ENCODE measurements at regions of chr3 and their contacts with region 1.

Region 1: DNA sequence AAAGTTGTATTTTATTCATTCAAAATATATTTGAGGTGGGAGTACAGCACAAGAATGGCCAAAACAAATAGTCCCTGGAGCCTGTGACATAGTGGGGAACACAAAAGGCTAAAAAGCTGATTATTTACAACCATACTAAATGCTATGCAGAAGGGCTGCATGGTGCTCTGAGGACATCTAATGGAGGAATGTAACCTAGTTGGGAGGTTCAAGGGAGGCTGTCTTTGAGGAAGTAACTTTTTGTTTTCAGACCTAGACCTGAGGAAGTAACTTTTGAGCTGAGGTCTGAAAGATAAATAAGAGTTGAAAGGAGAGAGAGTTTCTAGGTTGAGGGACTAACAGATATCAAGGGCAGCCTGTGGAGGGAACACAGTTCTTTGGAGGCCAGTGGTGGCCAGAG is 34.8 kb upstream of the RASA2 start:
- DNase-seq: peak in 1 of 5 donors; percentile 52
- H3K4me3 ChIP-seq: no peak overlapping the region
- H3K27ac ChIP-seq: no peak overlapping the region
- H3K4me1 ChIP-seq: peaks cover 3% of the 10 kb centered on the region
- H3K27me3 ChIP-seq: no peaks in the 10 kb centered on the region
- CTCF ChIP-seq: peak; percentile 26 to 72 (median 72)
- EP300 ChIP-seq: no peak
- POLR2A ChIP-seq: no peak

Region 2: DNA sequence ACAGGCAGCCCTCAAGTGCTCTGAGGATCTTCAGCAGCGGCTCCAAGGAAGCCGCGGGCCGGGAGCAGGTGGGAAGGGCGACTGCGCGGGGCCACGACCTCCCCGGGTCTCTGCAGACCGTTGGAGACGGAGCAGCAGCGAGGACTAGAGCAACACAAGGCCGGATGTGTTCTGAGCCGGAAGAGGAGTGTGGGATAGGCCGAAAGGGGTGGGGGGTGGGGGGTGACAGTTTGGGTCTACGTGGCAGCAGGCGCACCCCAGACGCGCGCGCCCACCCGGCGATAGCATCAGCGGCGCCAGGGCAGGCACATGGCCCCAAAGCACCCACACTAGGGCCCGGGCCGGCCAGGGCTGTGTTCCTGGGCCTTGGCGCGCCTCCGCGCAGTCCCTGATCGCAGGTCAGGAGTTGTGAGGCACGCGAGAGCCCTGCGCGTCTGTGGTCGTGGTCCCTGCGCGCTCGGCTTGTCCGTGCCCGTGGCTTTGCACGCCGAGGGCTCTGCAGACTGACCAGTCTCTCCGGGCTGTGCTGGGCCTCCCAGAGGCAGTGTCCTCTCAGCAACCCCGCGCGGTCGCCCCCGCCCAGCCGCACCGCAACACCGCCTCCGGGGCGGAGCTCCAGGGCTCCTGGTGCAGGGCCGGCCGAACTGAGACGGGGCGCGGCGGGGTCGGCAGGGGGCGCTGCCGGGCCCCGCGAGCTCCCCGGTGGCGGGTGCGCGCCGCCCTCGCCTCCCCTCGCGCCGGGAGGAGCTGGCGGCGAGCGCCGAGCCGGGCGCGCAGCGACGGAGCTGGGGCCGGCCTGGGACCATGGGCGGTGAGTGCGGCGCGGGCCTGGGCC is 220.7 kb before region 1 on chr3 and contains the start of gene PXYLP1:
- intact Hi-C with region 1: loop called in 1 of 4 experiments (anchors 10 kb)
- DNase-seq: peak; percentile 90 to 96 (median 94)
- H3K4me3 ChIP-seq: peak within 1 kb of the TSS; percentile 54
- H3K27ac ChIP-seq: peak within 1 kb of the TSS; percentile 70 to 79
- H3K4me1 ChIP-seq: peaks cover 6% of the 10 kb centered on the region
- H3K27me3 ChIP-seq: no peaks in the 10 kb centered on the region
- CTCF ChIP-seq: peak; percentile 46 to 90 (median 89)
- EP300 ChIP-seq: no peak
- POLR2A ChIP-seq: peak; percentile 39
- total RNA-seq, gene PXYLP1: 10.3 to 23.0 (median 15.7) TPM

Region 3: GRCh38 chr3:141311496-141312353 is 140.3 kb before region 1 on chr3:
- intact Hi-C with region 1: loop called in 3 of 4 experiments (anchors 5 kb)
- DNase-seq: peak; percentile 97 to 98 (median 98)
- H3K4me3 ChIP-seq: peak overlapping the region; percentile 64
- H3K27ac ChIP-seq: peak overlapping the region in 1 of 2 donors; percentile 54
- H3K4me1 ChIP-seq: peaks cover 5% of the 10 kb centered on the region
- H3K27me3 ChIP-seq: no peaks in the 10 kb centered on the region
- CTCF ChIP-seq: peak; percentile 56 to 81 (median 79)
- EP300 ChIP-seq: no peak
- POLR2A ChIP-seq: peak; percentile 55

Region 4: GRCh38 chr3:141355242-141355641 is 96.8 kb before region 1 on chr3:
- intact Hi-C with region 1: loop called in 2 of 4 experiments (anchors 5 kb)
- DNase-seq: no peak
- H3K4me3 ChIP-seq: no peak overlapping the region
- H3K27ac ChIP-seq: no peak overlapping the region
- H3K4me1 ChIP-seq: no peaks in the 10 kb centered on the region
- H3K27me3 ChIP-seq: no peaks in the 10 kb centered on the region
- CTCF ChIP-seq: no peak
- EP300 ChIP-seq: no peak
- POLR2A ChIP-seq: no peak

Region 5: DNA sequence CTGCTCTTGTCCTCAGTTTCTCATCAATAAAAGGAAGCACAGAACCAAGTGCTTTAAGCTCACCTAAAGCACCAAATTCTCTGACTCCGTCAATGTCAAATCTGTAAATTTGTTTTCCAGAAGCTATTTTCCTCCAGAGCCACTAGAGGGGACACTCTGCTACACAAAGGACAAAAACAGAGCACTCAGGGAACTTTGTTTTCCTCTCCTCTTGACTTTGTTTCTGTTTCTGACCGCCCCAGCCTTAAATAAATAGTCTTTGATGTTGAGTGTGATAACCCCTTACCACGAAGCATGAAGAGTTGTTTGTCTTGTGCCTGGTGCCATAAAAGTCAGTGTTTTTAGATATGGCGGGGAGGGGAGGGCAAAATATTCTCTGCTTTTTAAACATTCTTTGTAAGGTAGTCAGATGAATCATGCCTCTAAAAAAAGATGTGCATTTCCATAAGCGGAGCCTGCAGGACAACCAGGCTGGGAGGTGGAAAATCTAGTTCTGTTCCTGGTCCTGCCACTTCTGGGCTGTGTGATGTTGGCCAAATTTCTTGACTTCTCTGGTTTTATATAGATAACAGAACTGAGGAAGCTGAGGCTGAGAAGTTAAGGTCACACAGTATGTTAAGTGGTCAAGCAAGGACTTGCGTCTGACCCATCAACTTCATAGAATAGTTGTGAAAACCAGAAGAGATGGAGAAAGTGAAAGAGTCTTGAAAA is 91.0 kb before region 1 on chr3:
- intact Hi-C with region 1: loop called (anchors 2 to 5 kb)
- DNase-seq: peak in 1 of 5 donors; percentile 31
- H3K4me3 ChIP-seq: no peak overlapping the region
- H3K27ac ChIP-seq: no peak overlapping the region
- H3K4me1 ChIP-seq: peaks cover 2% of the 10 kb centered on the region
- H3K27me3 ChIP-seq: no peaks in the 10 kb centered on the region
- CTCF ChIP-seq: peak; percentile 62 to 85 (median 80)
- EP300 ChIP-seq: no peak
- POLR2A ChIP-seq: no peak

Region 6: GRCh38 chr3:141370065-141370533 is 81.9 kb before region 1 on chr3:
- intact Hi-C with region 1: loop called in 2 of 4 experiments (anchors 2 to 5 kb)
- DNase-seq: peak; percentile 51 to 78 (median 59)
- H3K4me3 ChIP-seq: no peak overlapping the region
- H3K27ac ChIP-seq: peak overlapping the region in 1 of 2 donors; percentile 87
- H3K4me1 ChIP-seq: peaks cover 19% of the 10 kb centered on the region
- H3K27me3 ChIP-seq: no peaks in the 10 kb centered on the region
- CTCF ChIP-seq: peak; percentile 20 to 66 (median 60)
- EP300 ChIP-seq: no peak
- POLR2A ChIP-seq: no peak

Region 7: DNA sequence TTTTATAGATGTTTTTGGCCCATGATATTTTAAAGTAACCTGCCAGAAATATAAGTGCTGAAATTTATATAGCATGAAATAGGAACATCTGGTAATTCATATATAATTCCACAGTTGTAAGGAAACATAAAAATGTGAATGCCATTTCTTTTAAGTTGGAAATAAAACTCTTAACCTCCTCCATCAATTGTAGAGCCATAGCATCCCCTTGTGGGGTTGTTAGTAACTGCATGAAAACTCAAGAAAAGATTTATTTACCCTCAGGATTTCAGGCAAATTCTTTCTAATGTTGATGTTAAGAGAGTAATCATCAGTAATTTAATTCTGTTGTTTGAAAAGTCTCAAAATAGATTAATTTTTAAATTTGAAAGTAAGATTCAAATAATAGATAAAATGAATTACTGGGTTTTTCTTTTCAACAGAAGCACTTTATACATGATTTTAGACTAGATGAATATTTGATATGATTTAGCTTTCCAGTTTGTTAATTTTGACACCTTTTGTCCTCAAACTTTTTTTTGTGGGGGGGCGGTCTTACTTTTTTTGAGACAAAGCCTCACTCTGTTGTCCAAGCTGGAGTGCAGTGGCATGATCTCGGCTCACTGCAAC is 109.5 kb after region 1 on chr3:
- intact Hi-C with region 1: loop called in 2 of 4 experiments (anchors 5 kb)
- DNase-seq: peak in 1 of 5 donors; percentile 38
- H3K4me3 ChIP-seq: no peak overlapping the region
- H3K27ac ChIP-seq: no peak overlapping the region
- H3K4me1 ChIP-seq: no peaks in the 10 kb centered on the region
- H3K27me3 ChIP-seq: no peaks in the 10 kb centered on the region
- CTCF ChIP-seq: peak; percentile 78 to 99 (median 96)
- EP300 ChIP-seq: no peak
- POLR2A ChIP-seq: no peak

Measured in ovary (tissue), 10 donors.